ENCODE measurements at regions of chr1 and their contacts with region 1.

Region 1: DNA sequence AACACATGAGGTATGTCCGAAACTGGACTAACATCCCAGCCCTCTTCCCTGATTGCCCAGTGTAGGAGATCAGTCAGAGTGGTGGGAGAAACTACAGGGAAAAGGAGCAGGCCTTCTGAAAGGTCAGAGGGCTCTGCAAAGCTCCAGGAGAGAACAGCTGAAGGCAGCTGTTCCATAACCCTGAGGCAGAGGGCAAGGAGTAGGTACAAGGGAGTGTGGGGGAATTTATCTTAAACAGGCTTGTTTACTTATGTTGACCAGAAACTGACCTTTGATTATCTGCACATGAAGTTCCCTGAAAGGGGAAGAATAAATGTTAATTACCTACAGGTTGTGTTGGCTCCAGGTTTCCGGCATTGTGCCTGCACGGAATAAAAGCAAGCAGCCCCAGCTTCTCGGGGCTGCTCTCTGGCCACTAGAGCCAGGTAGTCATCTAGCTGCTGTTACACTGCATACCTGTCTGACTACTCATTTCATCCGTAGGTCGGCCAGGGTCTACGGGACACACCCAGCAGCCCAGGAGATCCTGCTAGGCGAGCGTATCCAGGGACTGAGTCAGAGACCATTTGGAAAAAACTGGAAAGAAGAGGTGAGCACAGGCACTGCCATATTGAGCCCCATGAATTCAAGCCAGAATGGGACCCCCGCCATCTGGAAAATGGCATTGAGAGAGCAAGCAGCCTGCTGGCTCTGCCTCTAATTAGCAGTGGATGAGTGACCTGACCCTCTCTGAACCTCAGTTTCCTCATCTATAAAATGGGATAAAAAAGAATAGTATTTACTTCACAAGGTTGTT is 14.9 kb upstream of the PAQR7 start:
- DNase-seq: no peak
- ATAC-seq: no peak
- H3K4me3 ChIP-seq: no peak overlapping the region
- H3K4me3 Mint-ChIP-seq: no peak overlapping the region
- H3K27ac ChIP-seq: no peak overlapping the region
- H3K27ac Mint-ChIP-seq: no peak overlapping the region
- H3K4me1 ChIP-seq: peaks cover 6% of the 10 kb centered on the region
- H3K4me1 Mint-ChIP-seq: peaks cover 5% of the 10 kb centered on the region
- H3K27me3 ChIP-seq: no peaks in the 10 kb centered on the region
- H3K27me3 Mint-ChIP-seq: no peaks in the 10 kb centered on the region
- CTCF ChIP-seq: no peak

Region 2: DNA sequence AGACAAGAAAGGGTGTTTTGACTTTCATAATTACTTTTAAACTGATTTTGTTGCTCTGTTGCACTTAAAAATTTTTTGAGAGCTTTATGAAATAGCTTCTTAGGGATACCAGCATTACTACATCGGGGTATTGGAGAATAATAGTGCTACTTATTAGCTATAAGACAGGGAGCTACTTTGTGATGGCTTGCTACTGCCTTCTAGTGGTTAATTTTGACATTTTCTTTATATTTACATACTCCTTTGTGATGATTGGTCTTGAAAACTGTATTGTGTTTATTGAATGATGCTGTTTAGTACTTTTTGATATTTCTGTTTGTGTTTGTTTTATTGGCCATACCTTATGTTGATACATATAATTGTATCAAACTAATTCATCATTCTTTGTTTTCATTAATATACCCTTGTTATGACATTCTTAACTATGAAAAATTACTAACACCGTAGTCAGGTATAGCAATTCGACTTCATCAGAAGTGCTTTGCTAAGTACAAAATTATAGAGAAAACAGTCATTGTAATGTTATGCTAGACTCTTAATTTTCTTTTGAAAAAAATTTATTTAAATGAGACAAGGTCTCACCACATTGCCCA is 1059.7 kb before region 1 on chr1:
- CTCF ChIA-PET with region 1: no interaction called
- POLR2A ChIA-PET with region 1: no interaction called
- intact Hi-C with region 1: no loop called
- DNase-seq: peak in 3 of 14 experiments; percentile 65 to 75 (median 73)
- ATAC-seq: peak; percentile 44
- H3K4me3 ChIP-seq: no peak overlapping the region
- H3K4me3 Mint-ChIP-seq: no peak overlapping the region
- H3K27ac ChIP-seq: no peak overlapping the region
- H3K27ac Mint-ChIP-seq: no peak overlapping the region
- H3K4me1 ChIP-seq: no peaks in the 10 kb centered on the region
- H3K4me1 Mint-ChIP-seq: no peaks in the 10 kb centered on the region
- H3K27me3 ChIP-seq: no peaks in the 10 kb centered on the region
- H3K27me3 Mint-ChIP-seq: peaks cover 5% of the 10 kb centered on the region
- CTCF ChIP-seq: peak; percentile 91

Region 3: DNA sequence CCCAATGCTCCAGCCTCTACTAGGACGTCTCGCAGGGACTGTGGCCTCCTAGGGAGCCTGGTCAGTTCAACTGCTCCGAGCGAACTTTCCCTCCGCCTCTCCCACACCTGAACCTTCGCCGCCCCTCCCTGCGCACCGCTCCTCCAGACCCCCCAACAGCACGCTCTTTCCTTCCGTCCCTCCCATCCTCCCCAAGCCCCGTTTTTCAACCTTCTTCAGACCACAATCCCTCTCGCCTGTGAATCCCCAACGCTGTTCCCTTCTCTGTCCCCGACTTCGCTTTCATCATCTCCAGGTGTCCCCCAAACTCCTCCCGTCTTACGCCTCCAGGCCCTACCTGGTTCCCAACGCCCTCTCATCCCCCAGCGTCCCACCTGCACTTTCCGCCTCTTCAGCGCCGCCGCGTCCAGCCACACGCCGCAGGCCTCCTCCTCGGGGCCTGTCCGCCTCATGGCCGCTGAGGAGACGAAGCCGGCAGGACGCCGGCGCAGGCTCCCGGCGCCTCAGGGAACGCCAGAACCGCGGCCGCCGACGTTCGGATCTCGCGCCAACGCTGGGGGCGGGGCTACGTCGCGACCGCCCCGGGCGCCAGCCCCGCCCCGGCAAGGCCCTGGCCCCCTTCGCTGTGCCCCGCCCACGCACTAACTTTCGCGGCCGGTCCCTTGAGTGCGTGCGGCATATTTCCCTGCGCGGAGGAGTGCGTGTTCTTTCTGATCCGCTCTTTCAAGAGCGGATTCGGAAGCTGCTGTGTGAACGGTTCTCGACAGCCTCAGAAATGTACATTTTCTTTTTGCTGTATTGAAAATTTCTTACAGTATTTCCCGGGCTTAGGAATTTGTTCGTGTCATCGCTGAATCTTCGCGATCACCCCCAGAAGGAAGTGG is 31.3 kb before region 1 on chr1 and contains the start of gene AUNIP:
- CTCF ChIA-PET with region 1: interaction called, 3 read pairs
- POLR2A ChIA-PET with region 1: no interaction called
- intact Hi-C with region 1: loop called in 1 of 2 experiments (anchors 5 kb)
- DNase-seq: peak; percentile 78 to 97 (median 87)
- ATAC-seq: peak; percentile 99
- H3K4me3 ChIP-seq: peak within 1 kb of the TSS; percentile 72
- H3K4me3 Mint-ChIP-seq: peak within 1 kb of the TSS; percentile 86
- H3K27ac ChIP-seq: peak within 1 kb of the TSS; percentile 31 to 58
- H3K27ac Mint-ChIP-seq: peak within 1 kb of the TSS; percentile 87
- H3K4me1 ChIP-seq: peaks cover 22% of the 10 kb centered on the region
- H3K4me1 Mint-ChIP-seq: peaks cover 20% of the 10 kb centered on the region
- H3K27me3 ChIP-seq: no peaks in the 10 kb centered on the region
- H3K27me3 Mint-ChIP-seq: no peaks in the 10 kb centered on the region
- CTCF ChIP-seq: no peak
- total RNA-seq, gene AUNIP: not detected

Measured in CD4-positive, alpha-beta T cell (primary cell).